HEK293 (cell line): ENCODE measurements at regions of chr5 and their contacts with region 1.

Region 1: DNA sequence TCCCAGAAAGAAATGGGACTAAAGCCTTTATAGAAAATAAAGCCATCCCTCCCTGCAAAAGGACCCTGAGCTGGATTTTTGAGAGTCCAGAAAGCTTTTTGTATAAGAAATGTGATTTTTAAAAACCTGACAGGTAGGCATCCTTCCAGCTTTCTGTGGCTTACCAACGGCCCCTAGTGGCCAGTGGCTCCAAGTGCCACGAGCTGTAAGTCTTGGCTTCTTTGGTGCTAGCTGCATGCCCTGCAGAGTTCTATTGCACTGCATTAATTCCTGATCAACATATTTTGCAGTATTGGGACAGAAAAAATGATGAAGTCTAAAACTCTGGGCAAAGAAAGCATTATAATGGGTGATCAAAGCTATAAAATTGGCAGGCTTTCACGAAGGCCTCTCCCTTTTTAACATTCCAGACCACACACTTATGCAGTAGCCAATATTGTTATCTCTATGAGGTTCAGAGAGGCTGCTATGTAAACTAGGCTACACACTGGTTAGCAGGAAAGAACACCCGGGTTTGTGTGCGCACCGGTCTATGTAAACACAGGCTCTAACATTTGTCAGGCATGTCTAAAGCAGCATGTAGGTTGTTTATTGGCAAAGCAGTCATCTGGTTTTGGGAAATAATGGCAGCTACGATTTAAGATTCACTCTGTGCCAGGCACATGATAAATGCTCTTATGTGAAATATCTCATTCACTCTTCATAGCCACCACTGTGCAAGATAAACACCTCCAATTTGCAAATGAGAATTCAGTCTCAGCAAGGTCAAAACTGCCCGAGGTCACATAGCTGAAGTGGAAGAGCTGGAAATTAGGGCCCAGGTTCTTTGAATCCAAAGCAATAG is 55.2 kb downstream of the NMUR2 start:
- H3K4me3 ChIP-seq: no peak overlapping the region
- H3K27ac ChIP-seq: no peak overlapping the region
- H3K4me1 ChIP-seq: no peaks in the 10 kb centered on the region
- CTCF ChIP-seq: no peak

Region 2: GRCh38 chr5:151825445-151825844 is 524.5 kb before region 1 on chr5:
- CTCF ChIA-PET with region 1: interaction called, 57 read pairs
- POLR2A ChIA-PET with region 1: interaction called, 3 read pairs
- H3K4me3 ChIP-seq: no peak overlapping the region
- H3K27ac ChIP-seq: no peak overlapping the region
- H3K4me1 ChIP-seq: no peaks in the 10 kb centered on the region
- CTCF ChIP-seq: peak; percentile 64

Region 3: GRCh38 chr5:152142840-152143469 is 206.9 kb before region 1 on chr5:
- CTCF ChIA-PET with region 1: interaction called, 29 read pairs
- POLR2A ChIA-PET with region 1: no interaction called
- H3K4me3 ChIP-seq: no peak overlapping the region
- H3K27ac ChIP-seq: no peak overlapping the region
- H3K4me1 ChIP-seq: peaks cover 3% of the 10 kb centered on the region
- CTCF ChIP-seq: peak; percentile 63; the same call in 1 of the 2 replicates

Region 4: GRCh38 chr5:152335870-152336269 is 14.0 kb before region 1 on chr5:
- CTCF ChIA-PET with region 1: interaction called, 15 read pairs
- POLR2A ChIA-PET with region 1: no interaction called
- H3K4me3 ChIP-seq: no peak overlapping the region
- H3K27ac ChIP-seq: no peak overlapping the region
- H3K4me1 ChIP-seq: no peaks in the 10 kb centered on the region
- CTCF ChIP-seq: no peak

Region 5: DNA sequence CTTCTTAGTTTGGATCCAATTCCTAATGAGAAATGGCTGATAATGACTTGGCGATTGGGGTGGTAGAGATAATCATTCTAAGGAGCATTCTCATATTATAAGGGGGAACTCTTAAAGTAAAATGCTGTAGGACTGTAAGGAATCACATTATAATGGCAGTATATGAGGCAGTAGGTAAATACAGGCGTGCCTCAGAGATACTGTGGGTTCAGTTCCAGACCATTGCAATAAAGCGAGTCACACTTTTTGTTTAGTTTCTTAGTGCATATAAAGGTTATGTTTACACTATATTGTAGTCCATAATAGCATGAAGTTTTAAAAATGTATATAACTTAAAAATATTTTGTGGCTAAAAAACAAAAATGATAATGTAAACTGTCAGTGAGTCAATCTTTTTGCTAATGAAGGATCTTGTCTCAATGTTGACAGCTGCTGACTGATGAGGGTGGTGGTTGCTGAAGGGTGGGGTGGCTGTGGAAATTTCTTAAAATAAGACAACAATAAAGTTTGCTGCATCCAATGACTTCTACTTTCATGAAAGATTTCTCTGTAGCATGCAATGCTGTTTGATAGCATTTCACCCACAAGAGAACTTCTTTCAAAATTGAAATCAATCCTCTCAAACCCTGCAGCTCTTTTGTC is 39.4 kb after region 1 on chr5:
- CTCF ChIA-PET with region 1: interaction called, 13 read pairs
- POLR2A ChIA-PET with region 1: no interaction called
- H3K4me3 ChIP-seq: no peak overlapping the region
- H3K27ac ChIP-seq: no peak overlapping the region
- H3K4me1 ChIP-seq: no peaks in the 10 kb centered on the region
- CTCF ChIP-seq: no peak